Activated CD4-positive, alpha-beta memory T cell treated with anti-CD3 and anti-CD28 coated beads for 36 hours (primary cell): ENCODE measurements at regions of chr19 and their contacts with region 1.

Region 1: GRCh38 chr19:12287958-12288500 is 6.7 kb downstream of the ZNF44 start:
- DNase-seq: no peak
- H3K4me3 Mint-ChIP-seq: no peak overlapping the region
- H3K27ac Mint-ChIP-seq: peak overlapping the region; percentile 28
- H3K4me1 Mint-ChIP-seq: peaks cover 41% of the 10 kb centered on the region
- H3K27me3 Mint-ChIP-seq: no peaks in the 10 kb centered on the region

Region 2: DNA sequence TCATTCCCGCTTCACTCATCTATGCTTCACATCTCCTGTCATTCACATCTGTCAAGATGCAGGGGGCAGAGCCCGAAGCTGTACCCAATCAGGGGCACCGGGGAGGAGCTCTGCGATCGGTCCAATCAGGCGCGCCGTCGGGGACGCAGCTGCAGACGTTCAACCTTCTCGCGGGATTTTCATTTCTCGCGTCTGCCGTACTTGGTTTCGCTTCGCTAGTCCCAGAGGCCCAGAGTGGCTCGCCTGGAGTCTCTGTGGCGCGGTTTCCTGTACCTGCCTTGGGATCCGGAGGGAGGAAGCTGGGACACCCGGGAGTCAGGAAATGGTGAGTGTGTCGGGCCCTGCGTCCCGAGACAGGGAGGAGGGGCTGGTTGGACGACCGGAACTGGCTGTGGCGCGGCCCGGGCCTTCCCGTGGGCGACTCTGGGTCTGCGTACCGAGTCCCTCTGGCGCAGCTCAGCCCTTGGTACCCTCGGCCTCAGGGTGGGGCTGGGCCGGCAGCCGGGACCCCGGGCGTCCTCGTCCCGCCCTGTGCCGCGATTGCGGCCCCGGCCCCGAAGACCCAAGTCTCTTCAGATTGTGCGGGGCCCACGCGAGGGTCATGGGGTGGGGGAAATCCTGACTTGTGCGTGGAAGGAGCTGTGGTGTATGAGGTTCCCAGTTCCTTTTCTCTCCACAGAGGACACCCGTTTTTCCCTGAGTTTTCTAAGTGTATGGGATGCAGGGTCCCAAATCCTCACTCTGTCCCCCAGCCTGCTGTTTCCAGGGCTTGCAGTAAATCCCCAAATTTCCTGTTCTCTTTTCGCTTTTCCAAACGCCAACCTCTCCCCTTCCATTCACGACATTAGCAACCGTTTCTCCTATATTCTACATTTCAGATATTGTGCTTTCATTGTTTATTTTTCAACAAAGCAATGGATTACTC is 124.9 kb before region 1 on chr19 and contains the start of gene ZNF136:
- CTCF ChIA-PET with region 1: no interaction called
- POLR2A ChIA-PET with region 1: no interaction called
- intact Hi-C with region 1: loop called (anchors 2 kb)
- DNase-seq: peak; percentile 97
- H3K4me3 Mint-ChIP-seq: peak within 1 kb of the TSS; percentile 92
- H3K27ac Mint-ChIP-seq: peak within 1 kb of the TSS; percentile 94
- H3K4me1 Mint-ChIP-seq: peaks cover 40% of the 10 kb centered on the region
- H3K27me3 Mint-ChIP-seq: no peaks in the 10 kb centered on the region
- total RNA-seq, gene ZNF136: 9.5 to 12.8 TPM

Region 3: GRCh38 chr19:12217332-12217731 is 70.7 kb before region 1 on chr19:
- CTCF ChIA-PET with region 1: no interaction called
- POLR2A ChIA-PET with region 1: no interaction called
- intact Hi-C with region 1: loop called (anchors 10 kb)
- DNase-seq: no peak
- H3K4me3 Mint-ChIP-seq: no peak overlapping the region
- H3K27ac Mint-ChIP-seq: no peak overlapping the region
- H3K4me1 Mint-ChIP-seq: no peaks in the 10 kb centered on the region
- H3K27me3 Mint-ChIP-seq: no peaks in the 10 kb centered on the region

Region 4: DNA sequence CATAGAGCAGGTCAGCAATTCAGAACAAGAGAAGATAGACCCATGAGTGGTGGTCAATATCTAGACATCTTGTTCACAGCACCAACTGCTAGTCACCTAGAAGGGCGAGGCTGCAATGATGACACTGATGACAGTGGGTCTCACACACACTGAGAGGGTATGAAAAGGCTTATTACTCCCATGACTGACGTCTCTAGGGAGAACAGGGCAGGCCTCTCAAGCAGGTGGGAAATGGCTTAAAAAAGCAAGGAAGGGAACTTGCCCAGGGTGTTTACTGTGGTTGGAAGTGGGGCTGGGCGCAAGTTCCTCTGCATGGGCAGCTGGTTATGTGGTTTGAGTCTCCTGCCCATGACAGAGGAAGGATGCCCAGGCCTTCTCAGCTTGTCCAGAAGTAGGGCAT is 27.2 kb before region 1 on chr19:
- CTCF ChIA-PET with region 1: no interaction called
- POLR2A ChIA-PET with region 1: no interaction called
- intact Hi-C with region 1: no loop called
- DNase-seq: no peak
- H3K4me3 Mint-ChIP-seq: no peak overlapping the region
- H3K27ac Mint-ChIP-seq: no peak overlapping the region
- H3K4me1 Mint-ChIP-seq: peaks cover 2% of the 10 kb centered on the region
- H3K27me3 Mint-ChIP-seq: no peaks in the 10 kb centered on the region

Region 5: DNA sequence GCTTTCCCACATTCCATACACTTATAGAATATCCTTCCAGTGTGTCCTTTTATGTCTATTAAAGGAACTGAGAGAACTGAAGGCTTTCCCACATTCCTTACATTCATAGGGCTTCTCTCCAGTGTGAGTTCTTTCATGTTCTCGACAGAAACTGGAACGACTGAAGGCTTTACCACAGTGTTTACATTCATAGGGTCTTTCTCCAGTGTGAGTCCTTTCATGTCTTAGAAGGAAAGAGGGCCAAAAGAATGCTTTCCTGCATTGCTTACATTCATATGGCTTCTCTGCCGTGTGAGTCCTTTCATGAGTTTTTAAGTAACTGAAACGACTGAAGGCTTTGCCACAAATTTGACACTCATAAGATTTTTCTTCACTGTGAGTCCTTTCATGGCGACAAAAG is 15.6 kb before region 1 on chr19:
- CTCF ChIA-PET with region 1: no interaction called
- POLR2A ChIA-PET with region 1: no interaction called
- intact Hi-C with region 1: no loop called
- DNase-seq: no peak
- H3K4me3 Mint-ChIP-seq: no peak overlapping the region
- H3K27ac Mint-ChIP-seq: no peak overlapping the region
- H3K4me1 Mint-ChIP-seq: no peaks in the 10 kb centered on the region
- H3K27me3 Mint-ChIP-seq: no peaks in the 10 kb centered on the region